ENCODE measurements at regions of chr22 and their contacts with region 1.

Region 1: GRCh38 chr22:33579448-33580093 is 340.7 kb downstream of the LARGE1 start:
- DNase-seq: peak in 35 of 42 donors; percentile 23 to 90 (median 64)

Region 2: GRCh38 chr22:33302049-33302545 is 277.5 kb before region 1 on chr22:
- intact Hi-C with region 1: loop called (anchors 5 kb)
- DNase-seq: peak; percentile 82 to 95 (median 90)

Region 3: GRCh38 chr22:33524511-33525260 is 54.9 kb before region 1 on chr22:
- intact Hi-C with region 1: loop called (anchors 5 kb)
- DNase-seq: no peak

Measured in head of caudate nucleus (tissue), 42 donors.